HepG2 (cell line): ENCODE measurements at regions of chr4 and their contacts with region 1.

Region 1: DNA sequence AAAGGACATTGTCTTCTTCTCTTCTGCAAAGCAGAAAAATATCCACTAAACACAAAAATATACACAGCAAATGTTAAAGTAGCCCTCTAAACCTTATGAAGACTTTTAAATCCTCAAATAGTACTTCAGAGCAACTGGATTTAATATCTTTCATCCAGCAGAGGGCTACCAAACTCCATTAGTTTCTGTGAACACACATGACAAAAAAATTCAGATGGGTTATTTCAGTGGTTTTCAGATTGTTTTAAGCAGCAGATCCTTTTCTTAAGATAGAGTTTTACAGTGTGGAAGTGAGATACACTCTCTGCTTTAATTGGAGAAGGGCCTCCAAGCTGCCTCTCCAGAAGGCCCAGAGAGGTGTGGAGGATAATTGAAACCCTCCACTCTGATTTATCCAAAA is 56.7 kb downstream of the ANK2 start:
- DNase-seq: peak; percentile 59
- ATAC-seq: peak; percentile 64; the same call in 2 of the 3 replicates
- H3K4me3 ChIP-seq: no peak overlapping the region
- H3K27ac ChIP-seq: no peak overlapping the region
- H3K4me1 ChIP-seq: peaks cover 19% of the 10 kb centered on the region
- H3K27me3 ChIP-seq: no peaks in the 10 kb centered on the region
- CTCF ChIP-seq: peak; percentile 62
- EP300 ChIP-seq: no peak
- POLR2A ChIP-seq: no peak
- RAD21 ChIP-seq: peak; percentile 67; the same call in 1 of the 2 replicates

Region 2: GRCh38 chr4:113141901-113142346 is 35.8 kb after region 1 on chr4:
- CTCF ChIA-PET with region 1: no interaction called
- POLR2A ChIA-PET with region 1: interaction called, 11 read pairs
- in situ Hi-C with region 1: no loop called
- intact Hi-C with region 1: no loop called
- DNase-seq: peak; percentile 98
- ATAC-seq: peak; percentile 87
- H3K4me3 ChIP-seq: peak overlapping the region in 2 of 3 experiments; percentile 1 to 15; a peak in 1 of 6 replicates
- H3K27ac ChIP-seq: peak overlapping the region; percentile 49
- H3K4me1 ChIP-seq: peaks cover 52% of the 10 kb centered on the region
- H3K27me3 ChIP-seq: no peaks in the 10 kb centered on the region
- CTCF ChIP-seq: no peak
- EP300 ChIP-seq: peak; percentile 64 to 91; a peak in 3 of 4 replicates
- POLR2A ChIP-seq: peak in 1 of 2 experiments; percentile 59; a peak in 2 of 4 replicates
- RAD21 ChIP-seq: no peak

Region 3: GRCh38 chr4:113153529-113154101 is 47.5 kb after region 1 on chr4:
- CTCF ChIA-PET with region 1: interaction called, 28 read pairs
- POLR2A ChIA-PET with region 1: no interaction called
- in situ Hi-C with region 1: loop called (anchors 5 kb)
- intact Hi-C with region 1: loop called (anchors 1 kb)
- DNase-seq: peak; percentile 75
- ATAC-seq: peak; percentile 89
- H3K4me3 ChIP-seq: no peak overlapping the region
- H3K27ac ChIP-seq: no peak overlapping the region
- H3K4me1 ChIP-seq: peaks cover 44% of the 10 kb centered on the region
- H3K27me3 ChIP-seq: no peaks in the 10 kb centered on the region; a peak in 1 of 5 replicates
- CTCF ChIP-seq: peak; percentile 67
- EP300 ChIP-seq: peak; percentile 18 to 45; a peak in 3 of 4 replicates
- POLR2A ChIP-seq: no peak
- RAD21 ChIP-seq: peak; percentile 64

Region 4: GRCh38 chr4:113248320-113248719 is 142.2 kb after region 1 on chr4:
- CTCF ChIA-PET with region 1: interaction called, 4 read pairs
- POLR2A ChIA-PET with region 1: no interaction called
- in situ Hi-C with region 1: no loop called
- intact Hi-C with region 1: loop called (anchors 2 kb)
- DNase-seq: peak; percentile 10
- ATAC-seq: peak; percentile 77
- H3K4me3 ChIP-seq: no peak overlapping the region
- H3K27ac ChIP-seq: no peak overlapping the region
- H3K4me1 ChIP-seq: no peaks in the 10 kb centered on the region
- H3K27me3 ChIP-seq: no peaks in the 10 kb centered on the region
- CTCF ChIP-seq: peak; percentile 64
- EP300 ChIP-seq: no peak
- POLR2A ChIP-seq: no peak
- RAD21 ChIP-seq: no peak

Region 5: GRCh38 chr4:113278324-113278934 is 172.3 kb after region 1 on chr4:
- CTCF ChIA-PET with region 1: interaction called, 5 read pairs
- POLR2A ChIA-PET with region 1: no interaction called
- in situ Hi-C with region 1: no loop called
- intact Hi-C with region 1: loop called (anchors 1 kb)
- DNase-seq: peak; percentile 71
- ATAC-seq: peak; percentile 99
- H3K4me3 ChIP-seq: no peak overlapping the region
- H3K27ac ChIP-seq: no peak overlapping the region
- H3K4me1 ChIP-seq: no peaks in the 10 kb centered on the region
- H3K27me3 ChIP-seq: no peaks in the 10 kb centered on the region
- CTCF ChIP-seq: peak; percentile 85
- EP300 ChIP-seq: no peak
- POLR2A ChIP-seq: no peak
- RAD21 ChIP-seq: no peak

Region 6: GRCh38 chr4:113328514-113328913 is 222.4 kb after region 1 on chr4:
- CTCF ChIA-PET with region 1: interaction called, 4 read pairs
- POLR2A ChIA-PET with region 1: no interaction called
- in situ Hi-C with region 1: no loop called
- intact Hi-C with region 1: loop called (anchors 1 kb)
- DNase-seq: peak; percentile 15
- ATAC-seq: peak; percentile 94
- H3K4me3 ChIP-seq: no peak overlapping the region
- H3K27ac ChIP-seq: no peak overlapping the region
- H3K4me1 ChIP-seq: no peaks in the 10 kb centered on the region
- H3K27me3 ChIP-seq: no peaks in the 10 kb centered on the region
- CTCF ChIP-seq: peak; percentile 38
- EP300 ChIP-seq: no peak
- POLR2A ChIP-seq: no peak
- RAD21 ChIP-seq: no peak